Posterior cingulate gyrus (tissue), 11 donors: ENCODE measurements at regions of chr2 and their contacts with region 1.

Region 1: DNA sequence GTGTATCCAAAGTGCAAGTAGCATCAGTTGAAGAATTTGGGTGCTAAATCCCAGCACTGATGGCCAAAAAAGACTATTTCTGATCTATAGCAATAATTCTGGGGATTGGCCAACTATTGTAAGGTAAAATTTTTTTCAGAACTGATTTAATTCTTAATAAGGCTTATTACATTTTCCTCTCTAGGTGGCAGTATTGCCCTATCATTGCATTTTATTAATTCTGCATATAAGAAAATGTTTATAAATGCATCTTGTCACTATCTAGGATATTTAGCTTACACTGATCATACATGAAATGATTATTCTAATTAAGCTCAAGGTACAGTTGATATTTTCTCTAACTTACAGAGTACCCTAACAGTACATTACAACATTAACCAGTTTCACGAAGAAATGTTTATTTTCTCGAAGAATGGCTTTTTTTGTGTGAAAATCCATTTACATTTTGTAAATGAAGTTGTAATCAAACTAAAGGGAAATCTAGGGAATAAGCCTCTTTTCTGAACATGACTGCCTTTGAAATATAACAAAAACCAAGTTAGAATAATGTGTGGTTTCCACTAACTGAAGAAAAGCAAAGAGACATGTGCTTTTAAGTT is 11.0 kb downstream of the TTN start:
- DNase-seq: no peak

Region 2: GRCh38 chr2:178602901-178603300 is 193.3 kb before region 1 on chr2:
- intact Hi-C with region 1: no loop called
- DNase-seq: no peak

Region 3: GRCh38 chr2:178914259-178914849 is 118.2 kb after region 1 on chr2:
- intact Hi-C with region 1: loop called (anchors 1 kb)
- DNase-seq: peak; percentile 56 to 96 (median 80)